ENCODE measurements at regions of chr17 and their contacts with region 1.

Region 1: GRCh38 chr17:82022981-82023374 is at the start of gene LRRC45:
- H3K4me3 ChIP-seq: peak within 1 kb of the TSS; percentile 95
- H3K27ac ChIP-seq: peak within 1 kb of the TSS; percentile 94
- H3K4me1 ChIP-seq: peaks cover 11% of the 10 kb centered on the region
- CTCF ChIP-seq: no peak

Region 2: GRCh38 chr17:81871387-81872230 is 151.4 kb before region 1 on chr17:
- CTCF ChIA-PET with region 1: interaction called, 12 read pairs
- POLR2A ChIA-PET with region 1: interaction called, 8 read pairs
- H3K4me3 ChIP-seq: peak overlapping the region; percentile 85
- H3K27ac ChIP-seq: peak overlapping the region; percentile 100
- H3K4me1 ChIP-seq: peaks cover 17% of the 10 kb centered on the region; the same call in 1 of the 2 replicates
- CTCF ChIP-seq: peak; percentile 95

Region 3: GRCh38 chr17:81952792-81953228 is 70.2 kb before region 1 on chr17:
- CTCF ChIA-PET with region 1: interaction called, 12 read pairs
- POLR2A ChIA-PET with region 1: interaction called, 8 read pairs
- H3K4me3 ChIP-seq: no peak overlapping the region
- H3K27ac ChIP-seq: no peak overlapping the region
- H3K4me1 ChIP-seq: no peaks in the 10 kb centered on the region
- CTCF ChIP-seq: no peak

Region 4: GRCh38 chr17:81959362-81960129 is 63.4 kb before region 1 on chr17:
- CTCF ChIA-PET with region 1: interaction called, 105 read pairs
- POLR2A ChIA-PET with region 1: interaction called, 16 read pairs
- H3K4me3 ChIP-seq: peak overlapping the region; percentile 20
- H3K27ac ChIP-seq: peak overlapping the region; percentile 31; the same call in 1 of the 2 replicates
- H3K4me1 ChIP-seq: peaks cover 4% of the 10 kb centered on the region; the same call in 1 of the 2 replicates
- CTCF ChIP-seq: no peak

Region 5: GRCh38 chr17:81980707-81981343 is 42.2 kb before region 1 on chr17:
- CTCF ChIA-PET with region 1: interaction called, 16 read pairs
- POLR2A ChIA-PET with region 1: interaction called, 6 read pairs
- H3K4me3 ChIP-seq: no peak overlapping the region
- H3K27ac ChIP-seq: 0 out of 2 replicates have a peak overlapping the region, but pooled peaks have one; percentile 53
- H3K4me1 ChIP-seq: peaks cover 5% of the 10 kb centered on the region
- CTCF ChIP-seq: no peak

Region 6: DNA sequence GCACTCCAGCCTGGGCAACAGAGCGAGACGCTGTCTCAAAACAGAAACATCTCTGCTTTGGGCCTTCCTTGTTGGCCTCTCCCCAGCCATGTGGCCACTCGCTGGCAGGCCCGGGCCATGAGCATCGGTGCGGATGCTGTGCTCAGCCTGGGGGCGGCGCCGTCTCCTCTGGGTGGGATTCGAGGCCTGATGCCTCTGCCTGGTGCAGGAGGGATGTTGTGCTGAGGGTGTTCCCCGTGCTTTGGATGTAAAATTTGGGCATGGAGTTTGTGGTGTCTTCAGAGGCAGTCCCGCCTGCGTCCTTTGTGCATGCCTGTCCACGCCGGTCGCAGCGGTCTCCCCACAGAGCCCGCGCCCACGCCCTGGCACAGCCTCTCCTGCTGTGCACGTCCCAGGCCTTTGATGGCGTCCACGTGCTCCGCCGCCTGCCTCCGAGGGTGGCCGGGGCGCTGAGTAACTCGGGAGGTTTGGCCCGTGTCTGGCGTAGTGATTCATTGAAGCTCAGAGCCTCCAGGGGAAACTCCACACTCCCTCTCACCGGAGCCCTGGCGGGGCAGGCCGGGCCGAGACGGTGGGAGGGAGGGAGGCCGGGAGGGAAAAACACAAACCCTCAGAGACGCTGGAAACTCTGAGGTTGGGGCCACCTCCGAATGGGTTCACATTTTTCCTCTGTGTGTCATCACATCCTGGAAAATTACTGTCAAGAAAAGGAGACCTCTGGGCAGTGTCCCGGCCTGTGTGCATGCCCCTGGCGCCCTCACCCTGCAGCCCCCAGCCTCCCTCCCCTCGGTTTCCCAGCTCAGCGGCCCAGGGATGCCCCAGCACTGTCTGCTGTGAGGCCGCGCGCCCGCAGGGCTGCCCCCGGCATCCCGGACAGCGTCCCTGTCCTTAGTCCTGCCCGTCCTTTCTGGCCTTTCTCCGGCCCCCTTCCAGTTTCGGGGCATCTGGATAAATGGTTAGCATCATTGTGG is 19.3 kb before region 1 on chr17:
- CTCF ChIA-PET with region 1: interaction called, 31 read pairs
- POLR2A ChIA-PET with region 1: interaction called, 13 read pairs
- H3K4me3 ChIP-seq: no peak overlapping the region
- H3K27ac ChIP-seq: peak overlapping the region; percentile 17; the same call in 1 of the 2 replicates
- H3K4me1 ChIP-seq: peaks cover 6% of the 10 kb centered on the region; the same call in 1 of the 2 replicates
- CTCF ChIP-seq: no peak

Region 7: GRCh38 chr17:82037113-82037888 is 14.3 kb after region 1 on chr17 and contains the start of gene DCXR:
- CTCF ChIA-PET with region 1: interaction called, 42 read pairs
- POLR2A ChIA-PET with region 1: interaction called, 61 read pairs
- H3K4me3 ChIP-seq: peak within 1 kb of the TSS; percentile 64
- H3K27ac ChIP-seq: peak within 1 kb of the TSS; percentile 83
- H3K4me1 ChIP-seq: peaks cover 10% of the 10 kb centered on the region
- CTCF ChIP-seq: peak; percentile 94